ENCODE measurements at regions of chr11 and their contacts with region 1.

Region 1: GRCh38 chr11:87421422-87421821 is 383.7 kb downstream of the TMEM135 start:
- DNase-seq: peak; percentile 13
- ATAC-seq: peak; percentile 81
- H3K4me3 Mint-ChIP-seq: no peak overlapping the region
- H3K27ac Mint-ChIP-seq: no peak overlapping the region
- H3K4me1 Mint-ChIP-seq: no peaks in the 10 kb centered on the region
- H3K27me3 Mint-ChIP-seq: peaks cover 3% of the 10 kb centered on the region

Region 2: GRCh38 chr11:86869966-86870570 is 551.4 kb before region 1 on chr11:
- CTCF ChIA-PET with region 1: no interaction called
- POLR2A ChIA-PET with region 1: no interaction called
- intact Hi-C with region 1: loop called in 1 of 2 experiments (anchors 2 kb)
- DNase-seq: peak; percentile 75
- ATAC-seq: peak; percentile 78
- H3K4me3 Mint-ChIP-seq: no peak overlapping the region
- H3K27ac Mint-ChIP-seq: no peak overlapping the region
- H3K4me1 Mint-ChIP-seq: no peaks in the 10 kb centered on the region
- H3K27me3 Mint-ChIP-seq: no peaks in the 10 kb centered on the region

Region 3: DNA sequence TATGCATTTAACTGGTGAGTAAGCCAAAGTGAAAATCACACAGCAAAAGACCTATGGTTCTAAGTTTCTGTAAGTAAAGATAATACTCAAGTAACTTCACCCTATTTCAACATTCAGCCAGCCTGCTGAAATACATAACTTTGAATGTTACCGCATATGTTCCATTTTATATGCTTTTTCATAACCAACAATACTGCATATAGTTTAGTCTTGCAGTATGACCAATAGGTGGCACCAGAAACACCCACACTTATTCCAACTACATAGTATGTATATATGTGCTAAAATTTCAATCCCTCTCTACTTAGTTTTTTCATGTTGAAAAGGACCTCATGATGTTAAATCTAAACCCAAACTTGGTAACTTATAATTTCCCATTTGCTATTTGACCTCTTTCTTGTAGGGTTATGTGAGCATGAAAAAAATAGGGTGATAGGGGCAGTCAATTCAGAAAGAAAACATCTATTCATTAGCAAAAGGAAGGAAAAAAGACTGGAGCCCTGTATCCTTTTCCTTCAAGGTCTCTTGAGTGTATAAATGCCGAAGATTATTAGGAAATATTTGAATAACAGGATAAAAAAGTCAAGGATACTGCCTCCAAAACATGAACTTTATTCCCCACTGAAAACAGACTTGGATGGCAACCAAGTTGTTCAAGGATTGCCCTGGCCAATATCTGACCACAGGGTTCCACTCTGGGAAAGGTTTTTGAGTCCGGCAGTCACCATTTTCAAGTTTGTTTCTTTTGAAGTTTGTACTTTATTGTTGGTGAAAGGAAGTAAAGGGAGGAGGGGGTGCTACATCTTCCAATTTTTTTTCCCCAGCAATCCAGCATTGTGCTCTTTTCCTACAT is 442.4 kb before region 1 on chr11:
- CTCF ChIA-PET with region 1: no interaction called
- POLR2A ChIA-PET with region 1: no interaction called
- intact Hi-C with region 1: loop called in 1 of 2 experiments (anchors 5 kb)
- DNase-seq: no peak
- ATAC-seq: peak; percentile 77
- H3K4me3 Mint-ChIP-seq: no peak overlapping the region
- H3K27ac Mint-ChIP-seq: no peak overlapping the region
- H3K4me1 Mint-ChIP-seq: no peaks in the 10 kb centered on the region
- H3K27me3 Mint-ChIP-seq: peaks cover 2% of the 10 kb centered on the region

Region 4: DNA sequence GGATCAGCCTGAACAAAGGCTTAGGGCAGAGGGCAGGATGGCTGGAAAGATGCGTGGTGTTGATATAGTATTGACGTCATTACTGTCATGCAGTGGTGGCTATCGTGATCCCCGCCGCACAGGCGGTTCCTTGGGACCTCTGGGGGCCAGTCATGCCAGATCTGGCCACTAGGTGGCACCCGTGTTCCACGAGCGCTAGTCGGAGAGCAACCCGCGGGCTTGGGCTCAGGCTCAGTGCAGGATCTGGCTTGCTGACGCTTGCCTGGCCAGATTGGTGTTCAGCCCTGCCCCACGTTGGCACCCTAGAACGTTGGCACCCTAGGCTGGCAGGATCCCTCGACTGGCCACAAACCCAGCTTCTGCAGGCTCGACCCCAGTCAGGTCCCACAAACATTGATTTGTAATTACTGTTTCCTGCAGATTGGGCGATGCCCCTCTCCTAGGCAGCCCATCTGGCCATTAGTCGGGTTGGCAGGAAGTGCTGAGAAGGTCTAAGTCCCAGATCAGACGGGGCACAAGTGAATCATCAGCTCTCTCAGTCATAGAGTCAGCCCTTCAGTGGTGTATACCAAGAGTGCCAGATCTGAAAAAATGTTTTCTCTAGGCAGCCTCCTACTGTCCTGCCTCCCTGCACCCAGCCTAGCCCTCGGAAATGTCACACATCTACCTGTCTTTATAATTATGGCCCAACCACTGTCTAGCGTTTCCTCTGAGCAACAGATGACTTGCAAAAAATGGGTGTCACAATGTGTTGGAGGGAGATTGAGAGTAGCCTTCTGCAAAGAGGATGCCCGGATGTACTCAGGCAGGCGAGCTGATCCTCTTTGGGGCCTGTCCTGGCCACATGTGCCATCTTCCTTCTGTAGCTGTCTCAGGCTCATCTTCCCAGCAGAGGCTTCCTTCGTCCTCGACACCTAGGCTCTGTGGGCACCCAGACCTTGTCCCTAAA is 68.4 kb before region 1 on chr11:
- CTCF ChIA-PET with region 1: interaction called, 81 read pairs
- POLR2A ChIA-PET with region 1: no interaction called
- intact Hi-C with region 1: loop called (anchors 1 kb)
- DNase-seq: peak; percentile 92
- ATAC-seq: peak; percentile 93
- H3K4me3 Mint-ChIP-seq: no peak overlapping the region
- H3K27ac Mint-ChIP-seq: no peak overlapping the region
- H3K4me1 Mint-ChIP-seq: peaks cover 7% of the 10 kb centered on the region
- H3K27me3 Mint-ChIP-seq: peaks cover 8% of the 10 kb centered on the region

Region 5: DNA sequence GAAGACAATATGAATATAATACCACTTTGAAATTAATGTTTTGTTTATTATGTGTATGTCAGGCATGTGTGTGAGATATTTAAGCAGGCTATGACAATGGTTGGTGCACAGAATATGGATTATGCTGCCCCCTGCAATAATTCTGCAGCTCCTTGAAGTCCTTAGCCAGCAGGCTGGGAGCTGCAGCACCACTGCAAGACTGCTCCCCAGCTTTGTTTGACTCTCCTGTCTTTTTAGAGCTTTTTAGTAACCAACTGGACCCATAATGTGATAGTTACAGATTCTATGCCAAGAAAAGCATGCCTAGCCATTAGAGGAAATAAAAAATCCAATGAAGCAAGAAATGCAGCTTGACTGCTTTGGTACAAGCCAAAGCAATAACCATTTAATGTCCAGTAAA is 151.5 kb after region 1 on chr11:
- CTCF ChIA-PET with region 1: no interaction called
- POLR2A ChIA-PET with region 1: no interaction called
- intact Hi-C with region 1: no loop called
- DNase-seq: no peak
- ATAC-seq: no peak
- H3K4me3 Mint-ChIP-seq: no peak overlapping the region
- H3K27ac Mint-ChIP-seq: no peak overlapping the region
- H3K4me1 Mint-ChIP-seq: no peaks in the 10 kb centered on the region
- H3K27me3 Mint-ChIP-seq: no peaks in the 10 kb centered on the region